HCT116 (cell line): ENCODE measurements at regions of chr9 and their contacts with region 1.

Region 1: DNA sequence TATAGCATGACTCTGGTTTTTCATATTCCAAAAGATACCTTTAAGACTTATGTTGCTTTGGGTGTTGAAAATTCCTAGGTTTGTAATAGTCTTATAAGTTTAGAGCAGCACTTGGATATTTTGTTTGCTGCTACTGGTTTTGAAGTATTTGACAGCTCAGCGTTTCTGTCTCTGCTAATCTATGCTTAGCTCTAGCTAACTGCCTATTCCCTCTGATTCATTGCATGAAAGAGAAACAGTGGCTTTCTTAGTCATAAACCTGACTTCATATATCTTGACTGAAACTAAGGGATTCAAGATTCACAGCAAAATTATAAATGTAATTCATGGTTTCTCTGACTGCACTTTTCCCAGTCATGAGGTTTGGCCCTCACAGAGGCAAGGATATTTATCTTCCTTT is 35.6 kb upstream of the ANXA1 start:
- DNase-seq: no peak
- ATAC-seq: no peak
- H3K4me3 ChIP-seq: no peak overlapping the region
- H3K27ac ChIP-seq: no peak overlapping the region
- H3K4me1 ChIP-seq: peaks cover 14 to 40% of the 10 kb centered on the region in 2 experiments
- H3K27me3 ChIP-seq: no peaks in the 10 kb centered on the region
- CTCF ChIP-seq: no peak
- POLR2A ChIP-seq: no peak
- RAD21 ChIP-seq: 0 out of 2 replicates have a peak, but pooled peaks have one; percentile 1

Region 2: DNA sequence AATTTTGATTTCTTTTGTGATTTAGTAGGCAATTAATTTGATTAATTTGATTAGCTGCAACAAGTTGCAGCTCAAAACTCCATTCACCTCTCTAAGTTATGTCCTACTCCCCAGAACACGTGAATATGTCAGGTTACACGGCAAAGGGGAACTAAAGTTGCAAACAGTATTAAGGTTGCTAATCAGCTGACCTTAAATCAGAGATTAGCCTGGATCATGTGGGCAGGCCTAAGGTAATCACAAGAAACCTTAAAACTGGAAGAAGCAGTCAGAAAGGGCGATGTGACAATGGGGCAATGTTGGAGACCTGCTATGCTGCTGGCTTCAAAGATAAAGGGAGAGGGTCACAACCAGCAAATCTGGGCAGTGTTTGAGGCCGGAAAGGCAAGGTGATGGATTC is 11.7 kb before region 1 on chr9:
- CTCF ChIA-PET with region 1: interaction called, 17 read pairs
- POLR2A ChIA-PET with region 1: interaction called, 4 read pairs
- RAD21 ChIA-PET with region 1: no interaction called
- intact Hi-C with region 1: no loop called
- DNase-seq: no peak
- ATAC-seq: no peak
- H3K4me3 ChIP-seq: no peak overlapping the region
- H3K27ac ChIP-seq: no peak overlapping the region
- H3K4me1 ChIP-seq: peaks cover 0 to 12% of the 10 kb centered on the region in 2 experiments; a peak in 2 of 4 replicates
- H3K27me3 ChIP-seq: no peaks in the 10 kb centered on the region
- CTCF ChIP-seq: no peak
- POLR2A ChIP-seq: no peak
- RAD21 ChIP-seq: no peak

Region 3: DNA sequence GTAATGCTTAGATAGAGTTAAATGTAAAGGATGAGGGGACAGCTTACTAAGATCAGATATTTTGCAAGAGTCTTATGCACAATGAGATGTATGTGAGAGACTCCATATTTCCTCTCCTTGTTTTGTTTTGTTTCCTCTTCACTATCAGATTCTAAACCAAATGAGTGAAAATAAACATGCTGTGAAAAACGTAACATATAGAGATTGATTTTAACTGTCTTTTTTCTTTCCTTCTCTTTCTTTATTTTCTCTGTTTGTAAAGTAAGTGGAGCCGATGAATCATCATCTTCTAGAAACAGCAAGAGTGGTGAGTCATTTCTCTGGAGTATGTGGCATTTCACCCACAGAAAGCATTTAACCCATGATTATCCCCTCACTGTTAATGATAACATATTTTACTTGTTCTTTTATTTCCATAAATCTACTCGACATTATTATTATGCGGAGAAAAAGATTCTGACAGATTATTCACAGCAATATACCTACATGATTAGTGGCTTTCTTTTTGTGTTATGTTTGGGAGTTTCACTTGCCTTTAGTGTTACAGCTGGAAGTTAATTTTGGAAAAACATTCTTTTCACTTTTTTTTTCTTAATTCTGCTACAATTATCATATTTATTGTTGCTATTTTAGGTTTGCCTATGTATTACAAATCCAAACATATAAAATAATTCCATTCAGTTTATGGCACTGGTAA is 33.5 kb after region 1 on chr9:
- CTCF ChIA-PET with region 1: interaction called, 4 read pairs
- POLR2A ChIA-PET with region 1: interaction called, 5 read pairs
- RAD21 ChIA-PET with region 1: no interaction called
- intact Hi-C with region 1: loop called (anchors 2 kb)
- DNase-seq: peak; percentile 69
- ATAC-seq: peak; percentile 45
- H3K4me3 ChIP-seq: peak overlapping the region in 1 of 2 experiments; percentile 40; a peak in 2 of 4 replicates
- H3K27ac ChIP-seq: peak overlapping the region; percentile 95
- H3K4me1 ChIP-seq: peaks cover 54 to 74% of the 10 kb centered on the region in 2 experiments
- H3K27me3 ChIP-seq: no peaks in the 10 kb centered on the region
- CTCF ChIP-seq: no peak
- POLR2A ChIP-seq: no peak
- RAD21 ChIP-seq: peak; percentile 16; the same call in 1 of the 2 replicates